ENCODE measurements at regions of chr10 and their contacts with region 1.

Region 1: DNA sequence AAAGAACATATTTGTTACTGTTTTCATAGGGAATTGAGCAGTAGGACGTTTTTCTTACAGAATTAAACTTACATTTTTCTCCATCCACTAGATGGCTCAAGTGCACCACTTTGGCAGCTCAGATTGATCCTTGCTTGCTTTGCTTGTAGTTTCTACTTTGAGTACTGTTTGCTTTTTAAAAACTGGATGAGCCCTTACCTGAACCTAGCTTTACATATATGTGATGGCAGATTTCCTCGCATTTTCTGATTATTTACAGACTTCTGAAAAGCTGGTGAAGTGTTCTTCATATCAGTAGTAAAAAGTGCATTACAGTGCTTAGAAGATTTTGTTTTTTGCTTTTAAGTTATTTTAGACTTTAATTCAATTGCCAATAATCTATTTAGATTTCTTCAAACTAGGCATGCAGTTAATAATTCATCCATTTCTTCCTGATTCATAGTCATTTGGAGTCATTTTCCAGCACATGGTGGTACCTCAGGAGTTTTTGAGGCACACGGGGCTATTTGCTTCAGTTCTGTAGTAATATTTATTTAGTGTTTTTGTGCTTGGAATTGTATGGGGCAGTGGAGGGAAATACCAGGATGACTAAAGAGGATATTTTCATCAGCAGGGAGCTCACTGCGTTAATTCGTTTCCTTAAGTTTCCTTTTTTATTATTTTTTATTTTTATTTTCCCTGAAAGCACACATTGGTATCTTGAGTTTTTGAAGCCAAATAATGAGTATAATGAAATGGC is 57.3 kb downstream of the MAPK8 start:
- DNase-seq: peak; percentile 57 to 77
- H3K4me3 ChIP-seq: no peak overlapping the region
- H3K4me3 Mint-ChIP-seq: peak overlapping the region; percentile 27
- H3K27ac Mint-ChIP-seq: peak overlapping the region; percentile 30
- H3K4me1 ChIP-seq: peaks cover 38% of the 10 kb centered on the region
- H3K4me1 Mint-ChIP-seq: peaks cover 26% of the 10 kb centered on the region
- H3K27me3 ChIP-seq: no peaks in the 10 kb centered on the region
- H3K27me3 Mint-ChIP-seq: no peaks in the 10 kb centered on the region
- CTCF ChIP-seq: peak; percentile 86 to 94

Region 2: GRCh38 chr10:47388879-47389278 is 974.9 kb before region 1 on chr10:
- CTCF ChIA-PET with region 1: no interaction called
- POLR2A ChIA-PET with region 1: no interaction called
- intact Hi-C with region 1: no loop called
- DNase-seq: no peak
- H3K4me3 ChIP-seq: no peak overlapping the region
- H3K4me3 Mint-ChIP-seq: no peak overlapping the region
- H3K27ac Mint-ChIP-seq: no peak overlapping the region
- H3K4me1 ChIP-seq: peaks cover 6% of the 10 kb centered on the region; the same call in 1 of the 2 replicates
- H3K4me1 Mint-ChIP-seq: peaks cover 13% of the 10 kb centered on the region
- H3K27me3 ChIP-seq: no peaks in the 10 kb centered on the region
- H3K27me3 Mint-ChIP-seq: no peaks in the 10 kb centered on the region
- CTCF ChIP-seq: no peak

Region 3: GRCh38 chr10:48306265-48306869 is 57.4 kb before region 1 on chr10 and contains the start of gene MAPK8:
- CTCF ChIA-PET with region 1: interaction called, 3 read pairs
- POLR2A ChIA-PET with region 1: no interaction called
- intact Hi-C with region 1: loop called (anchors 1 kb)
- DNase-seq: peak; percentile 98 to 100
- H3K4me3 ChIP-seq: peak within 1 kb of the TSS; percentile 88
- H3K4me3 Mint-ChIP-seq: peak within 1 kb of the TSS; percentile 81
- H3K27ac Mint-ChIP-seq: peak within 1 kb of the TSS; percentile 47
- H3K4me1 ChIP-seq: peaks cover 21% of the 10 kb centered on the region
- H3K4me1 Mint-ChIP-seq: peaks cover 9% of the 10 kb centered on the region
- H3K27me3 ChIP-seq: no peaks in the 10 kb centered on the region
- H3K27me3 Mint-ChIP-seq: peaks cover 7% of the 10 kb centered on the region
- CTCF ChIP-seq: no peak
- total RNA-seq, gene MAPK8: 76.1 and 83.3 TPM in 2 replicates

Region 4: GRCh38 chr10:48384699-48384982 is 20.9 kb after region 1 on chr10:
- CTCF ChIA-PET with region 1: interaction called, 4 read pairs
- POLR2A ChIA-PET with region 1: no interaction called
- intact Hi-C with region 1: loop called (anchors 1 kb)
- DNase-seq: no peak
- H3K4me3 ChIP-seq: no peak overlapping the region
- H3K4me3 Mint-ChIP-seq: no peak overlapping the region
- H3K27ac Mint-ChIP-seq: peak overlapping the region; percentile 90
- H3K4me1 ChIP-seq: peaks cover 57% of the 10 kb centered on the region
- H3K4me1 Mint-ChIP-seq: peaks cover 34% of the 10 kb centered on the region
- H3K27me3 ChIP-seq: no peaks in the 10 kb centered on the region
- H3K27me3 Mint-ChIP-seq: no peaks in the 10 kb centered on the region
- CTCF ChIP-seq: no peak

Region 5: DNA sequence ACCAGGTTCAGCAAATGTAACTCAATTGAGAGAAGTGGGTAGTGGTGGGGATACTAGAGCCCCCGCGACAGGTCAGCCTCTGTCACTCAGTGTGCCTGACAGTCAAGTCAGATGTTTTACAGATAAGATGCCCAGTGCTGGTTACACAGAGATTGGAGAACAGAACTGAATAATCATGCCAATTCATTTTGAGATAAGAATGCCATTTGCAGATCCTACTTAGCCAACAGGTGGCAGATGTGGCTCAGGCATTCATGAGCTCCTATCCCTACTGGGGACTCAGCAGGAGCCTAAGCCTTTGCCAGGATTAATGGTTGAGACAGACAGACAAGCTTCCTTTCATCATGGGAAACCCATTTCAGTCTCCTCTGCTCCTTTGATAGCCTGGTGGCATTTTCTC is 80.5 kb after region 1 on chr10:
- CTCF ChIA-PET with region 1: interaction called, 13 read pairs
- POLR2A ChIA-PET with region 1: no interaction called
- intact Hi-C with region 1: loop called (anchors 1 kb)
- DNase-seq: peak; percentile 52 to 56
- H3K4me3 ChIP-seq: no peak overlapping the region
- H3K4me3 Mint-ChIP-seq: no peak overlapping the region
- H3K27ac Mint-ChIP-seq: no peak overlapping the region
- H3K4me1 ChIP-seq: peaks cover 8% of the 10 kb centered on the region
- H3K4me1 Mint-ChIP-seq: peaks cover 15% of the 10 kb centered on the region
- H3K27me3 ChIP-seq: no peaks in the 10 kb centered on the region
- H3K27me3 Mint-ChIP-seq: no peaks in the 10 kb centered on the region
- CTCF ChIP-seq: peak; percentile 29 to 68

Region 6: DNA sequence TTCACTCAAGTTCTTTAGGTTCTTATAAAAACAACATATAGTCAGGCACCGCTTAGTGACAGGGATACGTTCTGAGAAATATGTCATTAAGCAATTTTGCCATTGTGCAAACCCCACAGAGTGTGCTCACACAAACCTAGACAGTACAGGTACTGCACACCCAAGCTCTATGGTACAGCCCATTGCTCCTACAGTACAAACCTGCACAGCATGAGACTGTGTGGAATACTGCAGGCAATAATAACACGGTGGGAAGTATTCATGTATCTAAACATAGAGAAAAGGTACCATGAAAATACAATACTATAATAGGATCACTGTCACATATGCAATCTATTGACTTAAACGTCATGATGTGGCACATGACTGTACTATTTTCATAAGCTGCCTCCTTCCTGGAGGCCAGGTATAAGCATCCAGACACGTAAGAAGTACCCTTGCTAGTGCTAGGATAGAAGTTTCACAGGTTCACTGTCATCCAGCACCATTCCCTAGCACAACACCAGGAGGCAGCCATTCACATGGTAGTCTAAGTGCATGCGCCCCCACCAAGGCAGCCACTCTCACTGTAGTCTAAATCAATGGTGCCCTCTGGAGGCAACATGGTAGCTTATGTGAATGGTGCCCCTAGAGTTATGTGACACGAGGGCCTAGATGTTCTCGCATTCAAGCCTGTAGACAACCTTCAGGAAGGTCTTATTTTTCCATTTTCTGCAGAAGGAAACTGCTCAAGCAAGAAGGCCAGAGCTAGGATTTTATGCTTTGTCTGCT is 142.5 kb after region 1 on chr10:
- CTCF ChIA-PET with region 1: interaction called, 21 read pairs
- POLR2A ChIA-PET with region 1: no interaction called
- intact Hi-C with region 1: loop called (anchors 1 kb)
- DNase-seq: peak; percentile 69 to 74
- H3K4me3 ChIP-seq: no peak overlapping the region
- H3K4me3 Mint-ChIP-seq: no peak overlapping the region
- H3K27ac Mint-ChIP-seq: no peak overlapping the region
- H3K4me1 ChIP-seq: no peaks in the 10 kb centered on the region
- H3K4me1 Mint-ChIP-seq: no peaks in the 10 kb centered on the region
- H3K27me3 ChIP-seq: no peaks in the 10 kb centered on the region
- H3K27me3 Mint-ChIP-seq: no peaks in the 10 kb centered on the region
- CTCF ChIP-seq: peak; percentile 56 to 68

Region 7: GRCh38 chr10:48614481-48615390 is 250.9 kb after region 1 on chr10:
- CTCF ChIA-PET with region 1: no interaction called
- POLR2A ChIA-PET with region 1: no interaction called
- intact Hi-C with region 1: loop called (anchors 2 kb)
- DNase-seq: no peak
- H3K4me3 ChIP-seq: no peak overlapping the region
- H3K4me3 Mint-ChIP-seq: no peak overlapping the region
- H3K27ac Mint-ChIP-seq: no peak overlapping the region
- H3K4me1 ChIP-seq: no peaks in the 10 kb centered on the region
- H3K4me1 Mint-ChIP-seq: no peaks in the 10 kb centered on the region
- H3K27me3 ChIP-seq: no peaks in the 10 kb centered on the region
- H3K27me3 Mint-ChIP-seq: peaks cover 19% of the 10 kb centered on the region
- CTCF ChIP-seq: peak; percentile 44 to 62